Ovary (tissue), 10 donors: ENCODE measurements at regions of chr3 and their contacts with region 1.

Region 1: DNA sequence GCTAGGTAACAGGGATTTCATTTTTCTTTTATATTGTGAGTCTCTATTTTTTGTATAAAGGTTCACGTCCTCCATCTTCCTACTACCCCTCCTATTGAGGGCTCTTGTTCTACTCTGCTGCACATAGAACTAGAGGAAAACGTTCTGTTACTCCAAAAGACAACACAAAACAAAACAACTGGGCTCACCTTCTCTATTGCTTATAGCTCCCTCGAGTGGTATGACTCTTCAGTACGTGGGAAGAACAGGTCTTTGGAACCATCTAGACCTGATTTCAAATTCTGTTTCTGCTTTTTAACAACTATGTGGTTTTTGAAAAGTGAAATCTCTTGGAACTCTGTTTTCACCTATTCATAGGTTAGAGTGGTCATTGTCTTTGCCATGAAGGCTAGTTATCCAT is 515.3 kb downstream of the SOX2 start:
- DNase-seq: no peak
- H3K4me3 ChIP-seq: no peak overlapping the region
- H3K27ac ChIP-seq: no peak overlapping the region
- H3K4me1 ChIP-seq: no peaks in the 10 kb centered on the region
- H3K27me3 ChIP-seq: no peaks in the 10 kb centered on the region
- CTCF ChIP-seq: no peak
- EP300 ChIP-seq: no peak
- POLR2A ChIP-seq: no peak

Region 2: DNA sequence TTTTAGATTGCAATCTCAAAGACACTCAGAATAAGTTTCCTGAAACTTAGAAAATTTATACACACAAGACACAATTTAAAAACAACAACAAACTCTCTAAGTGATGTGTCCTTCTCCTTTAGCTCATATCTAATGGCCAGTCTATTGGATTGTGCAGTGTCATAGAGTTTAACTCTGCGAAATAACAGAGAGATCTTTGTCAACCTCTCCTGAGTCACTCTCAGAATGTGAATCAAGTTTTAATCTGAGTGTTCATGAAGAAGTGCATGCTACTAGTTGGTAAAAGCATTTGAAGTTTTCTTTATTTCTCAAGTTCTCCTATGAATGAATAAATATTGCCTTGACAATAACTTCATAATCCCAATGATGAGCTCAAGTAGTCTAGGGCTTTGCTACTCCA is 953.0 kb before region 1 on chr3:
- intact Hi-C with region 1: no loop called
- DNase-seq: no peak
- H3K4me3 ChIP-seq: no peak overlapping the region
- H3K27ac ChIP-seq: no peak overlapping the region
- H3K4me1 ChIP-seq: no peaks in the 10 kb centered on the region
- H3K27me3 ChIP-seq: no peaks in the 10 kb centered on the region
- CTCF ChIP-seq: no peak
- EP300 ChIP-seq: no peak
- POLR2A ChIP-seq: no peak

Region 3: DNA sequence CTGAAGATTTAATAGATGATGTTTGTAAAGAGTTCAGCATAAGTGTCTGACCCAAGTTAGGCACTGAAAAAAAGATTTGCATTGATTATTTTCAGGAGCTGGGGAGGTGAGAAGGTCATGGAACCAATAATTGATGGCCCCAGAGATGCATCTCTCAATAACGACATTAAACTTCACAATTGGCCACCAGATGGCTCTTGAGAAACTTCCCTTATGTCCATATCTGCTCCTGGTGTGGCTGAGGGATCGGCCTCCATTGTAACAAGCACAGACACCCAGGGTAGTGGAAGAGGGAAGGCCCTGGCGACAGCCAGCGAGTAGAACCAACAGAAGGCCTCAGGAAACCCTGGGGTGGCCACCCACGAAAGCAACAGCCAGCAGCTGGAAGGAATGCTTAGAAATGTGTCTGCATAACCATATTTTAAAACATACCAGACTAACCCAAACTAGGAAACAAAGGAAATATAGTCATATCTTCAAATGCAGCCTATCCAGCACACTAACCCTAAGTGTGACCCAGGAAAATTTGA is 21.4 kb after region 1 on chr3:
- intact Hi-C with region 1: loop called in 1 of 4 experiments (anchors 2 kb)
- DNase-seq: no peak
- H3K4me3 ChIP-seq: no peak overlapping the region
- H3K27ac ChIP-seq: no peak overlapping the region
- H3K4me1 ChIP-seq: no peaks in the 10 kb centered on the region
- H3K27me3 ChIP-seq: no peaks in the 10 kb centered on the region
- CTCF ChIP-seq: no peak
- EP300 ChIP-seq: no peak
- POLR2A ChIP-seq: no peak